Activated T-helper 1 cell treated with anti-CD3 and anti-CD28 coated beads, Interleukin-12 subunit alpha, Interleukin-12 subunit beta, Interleukin-2, Interleukin-4 antibody, amounts not matched to agents 30 ng/mL and 10 ng/mL and 1 ng/mL, durations not matched to agents 14 hours and 24 hours and 36 hours (primary cell): ENCODE measurements at regions of chr2 and their contacts with region 1.

Region 1: GRCh38 chr2:203730076-203730729 is 23.8 kb downstream of the CD28 start:
- DNase-seq: no peak
- H3K4me3 Mint-ChIP-seq: peak overlapping the region; percentile 32
- H3K27ac Mint-ChIP-seq: peak overlapping the region; percentile 97
- H3K4me1 Mint-ChIP-seq: peaks cover 92% of the 10 kb centered on the region
- H3K27me3 Mint-ChIP-seq: no peaks in the 10 kb centered on the region

Region 2: DNA sequence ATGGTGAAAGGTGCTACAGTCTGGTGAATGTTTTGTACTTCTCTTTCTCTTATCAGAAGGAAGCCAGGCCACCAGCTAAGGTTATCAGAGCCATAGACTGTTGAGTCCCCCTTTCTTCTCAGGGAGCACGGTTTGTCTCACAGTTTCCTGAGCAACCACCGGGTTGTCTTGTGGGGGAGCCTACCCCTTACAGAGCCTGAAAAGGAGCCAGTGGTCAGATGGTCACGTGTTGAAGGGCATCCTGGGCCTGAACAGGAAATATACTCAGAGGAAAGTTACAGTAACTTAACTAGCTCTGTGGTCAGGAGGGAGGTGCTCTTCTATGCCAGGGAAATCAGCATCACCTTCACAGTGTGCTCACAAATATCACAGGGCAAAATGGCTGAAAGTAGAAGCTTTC is 12.1 kb before region 1 on chr2:
- intact Hi-C with region 1: loop called (anchors 1 kb)
- DNase-seq: peak; percentile 67
- H3K4me3 Mint-ChIP-seq: peak overlapping the region; percentile 73
- H3K27ac Mint-ChIP-seq: peak overlapping the region; percentile 96
- H3K4me1 Mint-ChIP-seq: peaks cover 96% of the 10 kb centered on the region
- H3K27me3 Mint-ChIP-seq: no peaks in the 10 kb centered on the region

Region 3: GRCh38 chr2:203763938-203764664 is 33.9 kb after region 1 on chr2:
- intact Hi-C with region 1: loop called (anchors 1 kb)
- DNase-seq: peak; percentile 20
- H3K4me3 Mint-ChIP-seq: peak overlapping the region; percentile 22
- H3K27ac Mint-ChIP-seq: peak overlapping the region; percentile 95
- H3K4me1 Mint-ChIP-seq: peaks cover 66% of the 10 kb centered on the region
- H3K27me3 Mint-ChIP-seq: no peaks in the 10 kb centered on the region

Region 4: DNA sequence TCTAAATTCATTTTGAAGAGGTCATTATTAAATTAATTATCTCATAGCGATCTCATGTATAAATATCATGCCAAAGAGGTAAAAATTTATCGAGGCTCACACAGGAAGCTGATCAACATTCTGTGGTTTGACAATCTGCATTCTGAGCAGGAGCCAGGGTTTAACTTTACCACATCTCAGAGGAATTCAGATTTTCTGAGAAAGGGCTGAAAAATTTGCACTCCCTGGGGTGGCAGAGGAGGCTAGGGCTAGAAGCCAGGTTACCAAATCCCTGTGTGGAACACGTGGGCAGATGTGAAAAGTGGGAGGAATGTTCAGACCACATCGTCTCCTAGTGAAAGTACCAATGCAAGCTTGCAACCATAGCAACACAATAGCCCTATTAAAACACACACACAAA is 73.9 kb after region 1 on chr2:
- intact Hi-C with region 1: loop called (anchors 1 kb)
- DNase-seq: no peak
- H3K4me3 Mint-ChIP-seq: peak overlapping the region; percentile 19
- H3K27ac Mint-ChIP-seq: peak overlapping the region; percentile 76
- H3K4me1 Mint-ChIP-seq: peaks cover 80% of the 10 kb centered on the region
- H3K27me3 Mint-ChIP-seq: peaks cover 2% of the 10 kb centered on the region

Region 5: DNA sequence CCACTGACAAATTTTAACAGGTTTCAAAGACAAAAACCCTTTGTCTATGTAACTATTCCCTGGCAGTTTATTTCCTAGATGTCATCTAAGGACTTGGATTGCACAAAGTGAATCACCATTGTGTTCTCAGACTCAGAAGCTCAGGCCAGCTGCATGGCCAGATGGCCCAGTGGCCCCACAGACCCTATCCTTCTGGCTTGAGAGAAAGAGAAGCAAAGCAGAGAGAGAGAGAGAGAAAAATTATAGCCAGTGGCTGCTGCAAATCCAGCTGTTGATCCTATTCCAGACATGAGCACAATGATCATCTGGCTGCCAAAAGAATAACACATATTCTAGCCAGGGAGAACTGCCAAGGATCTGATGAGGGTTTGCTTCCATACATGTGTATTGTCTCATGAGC is 163.2 kb after region 1 on chr2:
- intact Hi-C with region 1: loop called (anchors 2 kb)
- DNase-seq: no peak
- H3K4me3 Mint-ChIP-seq: no peak overlapping the region
- H3K27ac Mint-ChIP-seq: peak overlapping the region; percentile 89
- H3K4me1 Mint-ChIP-seq: peaks cover 73% of the 10 kb centered on the region
- H3K27me3 Mint-ChIP-seq: no peaks in the 10 kb centered on the region

Region 6: GRCh38 chr2:203989521-203989920 is 259.3 kb after region 1 on chr2:
- intact Hi-C with region 1: loop called (anchors 5 kb)
- DNase-seq: no peak
- H3K4me3 Mint-ChIP-seq: peak overlapping the region; percentile 3
- H3K27ac Mint-ChIP-seq: peak overlapping the region; percentile 78
- H3K4me1 Mint-ChIP-seq: peaks cover 37% of the 10 kb centered on the region
- H3K27me3 Mint-ChIP-seq: no peaks in the 10 kb centered on the region

Region 7: DNA sequence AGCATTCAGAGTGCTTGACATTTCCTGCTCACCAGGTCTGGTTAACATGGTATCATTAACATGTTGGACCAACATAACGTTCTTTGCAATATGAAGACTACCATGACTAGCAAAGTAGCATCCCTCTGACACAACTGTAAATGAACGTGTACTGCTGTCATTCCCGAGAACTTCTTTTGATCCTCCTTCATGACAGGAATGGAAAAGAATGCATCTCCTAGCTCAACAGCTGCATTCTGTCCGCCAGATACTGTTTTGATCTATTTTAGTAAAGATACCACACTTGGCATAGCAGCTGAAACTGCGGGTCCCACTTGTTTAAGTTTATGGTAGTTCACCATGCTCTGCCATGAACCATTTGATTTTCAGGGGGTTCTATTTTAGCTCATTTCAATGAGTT is 670.9 kb after region 1 on chr2:
- intact Hi-C with region 1: no loop called
- DNase-seq: no peak
- H3K4me3 Mint-ChIP-seq: no peak overlapping the region
- H3K27ac Mint-ChIP-seq: no peak overlapping the region
- H3K4me1 Mint-ChIP-seq: no peaks in the 10 kb centered on the region
- H3K27me3 Mint-ChIP-seq: no peaks in the 10 kb centered on the region